ENCODE measurements at regions of chrX and their contacts with region 1.

Region 1: GRCh38 chrX:132092439-132093065 is 35.3 kb downstream of the FRMD7 start:
- DNase-seq: peak; percentile 73

Region 2: GRCh38 chrX:132219343-132219768 is 126.8 kb after region 1 on chrX and contains the start of gene RAP2C:
- CTCF ChIA-PET with region 1: interaction called, 22 read pairs
- POLR2A ChIA-PET with region 1: no interaction called
- DNase-seq: peak; percentile 82

Measured in HEK293T (cell line).